ENCODE measurements at regions of chr2 and their contacts with region 1.

Region 1: DNA sequence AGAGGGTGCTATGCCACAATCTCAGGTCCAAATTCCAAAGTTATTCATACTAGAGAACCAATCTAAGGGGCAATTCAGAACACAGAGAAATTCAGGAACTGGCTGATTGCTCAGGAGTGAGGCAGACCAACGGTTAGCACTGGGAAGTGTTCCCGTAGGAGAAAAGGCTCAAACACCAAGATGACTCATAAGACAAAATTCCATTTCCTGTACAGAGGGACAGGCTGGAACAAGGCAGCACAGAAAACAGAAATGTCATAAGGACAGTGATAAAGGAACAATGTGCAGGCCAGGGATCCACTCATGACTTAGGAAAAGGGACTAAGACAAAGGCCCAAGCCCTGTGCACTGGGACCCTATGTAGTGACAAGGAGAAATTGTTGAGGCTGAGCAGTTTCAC is 54.2 kb downstream of the PDE1A start:
- DNase-seq: no peak
- ATAC-seq: peak; percentile 93

Region 2: GRCh38 chr2:182252534-182252933 is 120.1 kb before region 1 on chr2:
- intact Hi-C with region 1: loop called (anchors 5 kb)
- DNase-seq: no peak
- ATAC-seq: no peak

Region 3: GRCh38 chr2:182280118-182280517 is 92.5 kb before region 1 on chr2:
- intact Hi-C with region 1: no loop called
- DNase-seq: no peak
- ATAC-seq: peak; percentile 69

Region 4: GRCh38 chr2:182559623-182560022 is 187.0 kb after region 1 on chr2:
- intact Hi-C with region 1: no loop called
- DNase-seq: no peak
- ATAC-seq: no peak